G401 (cell line): ENCODE measurements at regions of chr5 and their contacts with region 1.

Region 1: DNA sequence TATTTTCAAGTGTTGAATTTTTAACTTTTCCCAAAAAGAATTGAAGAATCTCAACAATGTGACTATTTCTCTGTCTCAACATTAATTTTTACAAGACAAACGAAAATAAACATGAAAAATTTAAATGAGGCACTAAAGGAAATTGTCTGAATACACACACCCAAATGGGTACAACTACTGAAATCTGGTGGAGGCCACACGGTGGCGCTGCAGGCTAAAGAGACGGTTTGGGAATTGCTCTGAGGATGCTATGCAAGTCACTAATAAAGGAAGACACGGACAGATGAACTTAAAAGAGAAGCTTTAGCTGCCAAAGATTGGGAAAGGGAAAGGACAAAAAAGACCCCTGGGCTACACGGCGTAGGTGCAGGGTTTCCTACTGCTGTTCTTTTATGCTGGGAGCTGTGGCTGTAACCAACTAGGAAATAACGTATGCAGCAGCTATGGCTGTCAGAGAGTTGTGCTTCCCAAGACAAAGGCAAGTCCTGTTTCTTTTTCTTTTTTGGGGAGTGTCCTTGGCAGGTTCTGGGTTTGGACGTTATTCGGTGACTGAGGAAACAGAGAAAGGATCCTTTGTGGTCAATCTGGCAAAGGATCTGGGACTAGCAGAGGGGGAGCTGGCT is at the start of gene PCDHB10:
- DNase-seq: peak; percentile 57
- total RNA-seq, gene PCDHB10: 0.44 TPM in 1 of 2 replicates, not detected in the other

Region 2: DNA sequence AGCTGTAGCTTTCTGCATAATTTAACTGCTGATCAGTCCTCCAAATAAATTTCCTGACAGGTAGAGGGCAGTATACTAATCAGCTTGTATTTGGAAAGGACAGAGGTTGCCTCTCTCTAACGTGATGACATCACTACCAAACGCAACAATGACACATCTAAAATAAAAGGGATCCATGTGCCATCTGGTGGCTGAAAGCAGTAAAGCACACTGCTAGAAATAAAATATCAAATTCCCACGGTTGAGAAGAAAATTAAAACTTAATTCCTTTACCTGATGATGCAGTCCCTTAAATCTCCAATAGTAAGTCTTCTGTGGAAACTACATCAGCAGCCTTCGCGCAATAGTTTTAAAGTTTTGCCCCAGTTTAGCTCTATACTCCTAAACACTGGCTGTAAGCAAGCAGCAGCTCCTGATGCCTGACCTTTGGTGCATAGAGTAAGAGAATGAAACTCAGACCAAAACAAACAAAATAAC is 372.0 kb after region 1 on chr5:
- in situ Hi-C with region 1: loop called (anchors 25 kb)
- DNase-seq: peak; percentile 91